T-cell (primary cell): ENCODE measurements at regions of chr19 and their contacts with region 1.

Region 1: GRCh38 chr19:36054119-36054732 is at the start of gene THAP8:
- DNase-seq: peak; percentile 99 to 100 (median 100)
- ATAC-seq: peak; percentile 85 to 90 (median 86)
- H3K4me3 ChIP-seq: peak within 1 kb of the TSS; percentile 90 to 91
- H3K4me3 Mint-ChIP-seq: peak within 1 kb of the TSS; percentile 92 to 98 (median 97)
- H3K27ac ChIP-seq: peak within 1 kb of the TSS; percentile 88
- H3K27ac Mint-ChIP-seq: peak within 1 kb of the TSS; percentile 94 to 99
- H3K4me1 ChIP-seq: peaks cover 12 to 21% of the 10 kb centered on the region in 2 experiments
- H3K4me1 Mint-ChIP-seq: peaks cover 20 to 27% (median 23%) of the 10 kb centered on the region in 3 donors
- H3K27me3 ChIP-seq: no peaks in the 10 kb centered on the region
- H3K27me3 Mint-ChIP-seq: no peaks in the 10 kb centered on the region
- total RNA-seq, gene THAP8: 2.6 to 8.0 (median 4.7) TPM

Region 2: DNA sequence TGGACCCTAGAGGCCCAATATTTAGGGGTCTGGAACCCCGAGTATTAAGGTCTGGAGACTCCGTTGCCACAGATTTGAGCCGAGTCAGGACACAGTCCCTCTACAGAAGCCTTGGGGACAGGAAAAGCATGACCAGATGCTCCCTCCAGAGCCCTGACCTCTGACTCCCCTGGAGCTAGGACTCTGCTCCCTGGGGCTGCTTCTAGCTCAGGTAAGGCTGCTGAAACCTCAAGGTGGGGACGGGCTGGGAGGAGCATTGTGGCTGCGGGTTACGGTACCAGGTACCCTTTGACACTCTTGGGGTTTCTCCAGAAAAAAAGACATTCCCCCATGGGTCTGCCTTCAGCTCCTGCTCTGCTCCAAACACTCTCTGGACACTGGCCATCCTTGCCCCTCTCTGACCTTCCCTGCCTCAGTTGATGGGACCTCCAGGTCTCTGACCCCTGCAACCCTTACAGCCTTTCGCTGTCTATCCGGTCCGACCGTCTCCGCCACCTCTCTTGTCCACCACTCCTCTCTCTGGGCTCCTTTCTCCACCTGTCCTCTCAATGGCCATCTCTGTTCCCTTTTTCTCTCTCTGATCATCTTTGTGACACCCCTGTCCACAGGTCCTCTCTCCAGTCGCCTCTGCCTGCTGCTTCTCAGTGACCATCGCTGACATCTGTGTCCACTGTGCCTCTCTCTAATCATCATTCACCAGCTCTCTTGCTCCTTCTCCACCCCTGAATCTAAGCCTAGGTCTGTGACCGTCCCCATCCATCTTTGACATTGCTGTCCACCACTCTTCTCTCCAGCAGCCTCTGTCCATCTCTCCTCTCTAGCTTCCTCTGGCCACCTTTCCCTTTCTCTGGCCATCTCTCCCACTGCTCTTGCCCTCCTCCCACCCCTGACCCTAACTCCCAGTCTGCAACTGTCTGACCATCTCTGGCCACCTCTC is 116.6 kb before region 1 on chr19:
- CTCF ChIA-PET with region 1: no interaction called
- POLR2A ChIA-PET with region 1: no interaction called
- DNase-seq: no peak
- ATAC-seq: peak in 2 of 4 experiments; percentile 32 to 69
- H3K4me3 ChIP-seq: peak overlapping the region; percentile 55 to 57
- H3K4me3 Mint-ChIP-seq: peak overlapping the region; percentile 76 to 84 (median 82)
- H3K27ac ChIP-seq: no peak overlapping the region
- H3K27ac Mint-ChIP-seq: peak overlapping the region; percentile 81 to 84
- H3K4me1 ChIP-seq: peaks cover 10 to 43% of the 10 kb centered on the region in 2 experiments
- H3K4me1 Mint-ChIP-seq: peaks cover 38 to 39% (median 38%) of the 10 kb centered on the region in 3 donors
- H3K27me3 ChIP-seq: peaks cover 0 to 3% of the 10 kb centered on the region in 2 experiments
- H3K27me3 Mint-ChIP-seq: no peaks in the 10 kb centered on the region

Region 3: GRCh38 chr19:35949131-35949530 is 105.1 kb before region 1 on chr19:
- CTCF ChIA-PET with region 1: no interaction called
- POLR2A ChIA-PET with region 1: interaction called in 1 of 2 experiments, 13 read pairs
- DNase-seq: no peak
- ATAC-seq: no peak
- H3K4me3 ChIP-seq: no peak overlapping the region
- H3K4me3 Mint-ChIP-seq: no peak overlapping the region
- H3K27ac ChIP-seq: no peak overlapping the region
- H3K27ac Mint-ChIP-seq: peak overlapping the region; percentile 82 to 96
- H3K4me1 ChIP-seq: peaks cover 6 to 60% of the 10 kb centered on the region in 2 experiments
- H3K4me1 Mint-ChIP-seq: peaks cover 52 to 74% (median 63%) of the 10 kb centered on the region in 3 donors
- H3K27me3 ChIP-seq: no peaks in the 10 kb centered on the region
- H3K27me3 Mint-ChIP-seq: no peaks in the 10 kb centered on the region

Region 4: GRCh38 chr19:36103626-36104552 is 49.7 kb after region 1 on chr19:
- CTCF ChIA-PET with region 1: interaction called in 1 of 2 experiments, 10 read pairs
- POLR2A ChIA-PET with region 1: no interaction called
- DNase-seq: no peak
- ATAC-seq: no peak
- H3K4me3 ChIP-seq: no peak overlapping the region
- H3K4me3 Mint-ChIP-seq: no peak overlapping the region
- H3K27ac ChIP-seq: no peak overlapping the region
- H3K27ac Mint-ChIP-seq: no peak overlapping the region
- H3K4me1 ChIP-seq: no peaks in the 10 kb centered on the region
- H3K4me1 Mint-ChIP-seq: no peaks in the 10 kb centered on the region
- H3K27me3 ChIP-seq: no peaks in the 10 kb centered on the region
- H3K27me3 Mint-ChIP-seq: no peaks in the 10 kb centered on the region